H1 (cell line): ENCODE measurements at regions of chr2 and their contacts with region 1.

Region 1: GRCh38 chr2:100381240-100381639 is 36.2 kb downstream of the CHST10 start:
- DNase-seq: peak; percentile 67 to 97
- H3K4me3 ChIP-seq: no peak overlapping the region
- H3K27ac ChIP-seq: no peak overlapping the region
- H3K4me1 ChIP-seq: no peaks in the 10 kb centered on the region
- H3K27me3 ChIP-seq: no peaks in the 10 kb centered on the region
- CTCF ChIP-seq: peak; percentile 28 to 90 (median 87)
- EP300 ChIP-seq: no peak
- POLR2A ChIP-seq: no peak
- RAD21 ChIP-seq: peak; percentile 81 to 87

Region 2: DNA sequence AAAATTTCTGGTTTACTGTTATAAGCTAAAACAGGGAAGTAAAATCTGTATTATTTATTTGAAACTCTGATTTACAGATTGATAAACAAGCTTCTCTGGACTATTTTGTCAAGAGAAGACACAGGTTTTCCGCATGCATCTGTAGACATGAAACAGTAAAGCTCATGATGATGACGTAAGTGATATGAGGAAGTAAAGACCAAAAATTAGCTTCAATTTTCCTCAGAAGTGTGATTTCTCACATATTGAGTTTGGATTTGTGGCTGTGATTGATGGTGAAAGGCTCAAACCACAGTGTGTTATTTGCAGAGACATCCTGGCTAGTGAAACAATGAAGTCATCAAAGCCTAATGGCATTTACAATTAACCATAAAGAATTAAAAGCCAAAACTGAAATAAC is 46.3 kb before region 1 on chr2:
- CTCF ChIA-PET with region 1: interaction called, 11 read pairs
- POLR2A ChIA-PET with region 1: no interaction called
- DNase-seq: no peak
- H3K4me3 ChIP-seq: no peak overlapping the region
- H3K27ac ChIP-seq: no peak overlapping the region
- H3K4me1 ChIP-seq: no peaks in the 10 kb centered on the region; a peak in 1 of 7 replicates
- H3K27me3 ChIP-seq: no peaks in the 10 kb centered on the region
- CTCF ChIP-seq: no peak
- EP300 ChIP-seq: no peak
- POLR2A ChIP-seq: no peak
- RAD21 ChIP-seq: no peak

Region 3: DNA sequence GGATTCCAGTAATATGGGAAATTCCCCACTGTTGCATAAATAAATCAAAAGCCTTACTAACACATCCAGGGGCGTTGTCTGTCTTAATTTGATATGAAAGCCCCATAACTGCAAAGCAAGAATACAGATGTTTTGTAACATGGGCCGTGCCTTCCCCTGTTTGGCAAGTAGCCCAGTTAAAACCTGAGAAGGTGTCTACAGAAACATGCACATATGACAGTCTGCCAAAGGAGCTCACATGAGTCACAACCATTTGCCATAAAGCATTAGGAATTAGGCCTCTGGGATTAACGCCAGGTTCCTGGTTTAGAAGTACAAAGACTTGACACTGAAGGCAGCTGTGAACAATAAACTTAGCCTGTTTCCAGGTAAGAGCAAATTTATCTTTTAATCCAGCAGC is 15.8 kb before region 1 on chr2:
- CTCF ChIA-PET with region 1: interaction called, 18 read pairs
- POLR2A ChIA-PET with region 1: no interaction called
- DNase-seq: no peak
- H3K4me3 ChIP-seq: no peak overlapping the region
- H3K27ac ChIP-seq: no peak overlapping the region
- H3K4me1 ChIP-seq: peaks cover 0 to 8% (median 4%) of the 10 kb centered on the region in 4 experiments; a peak in 3 of 7 replicates
- H3K27me3 ChIP-seq: no peaks in the 10 kb centered on the region
- CTCF ChIP-seq: no peak
- EP300 ChIP-seq: no peak
- POLR2A ChIP-seq: no peak
- RAD21 ChIP-seq: no peak

Region 4: DNA sequence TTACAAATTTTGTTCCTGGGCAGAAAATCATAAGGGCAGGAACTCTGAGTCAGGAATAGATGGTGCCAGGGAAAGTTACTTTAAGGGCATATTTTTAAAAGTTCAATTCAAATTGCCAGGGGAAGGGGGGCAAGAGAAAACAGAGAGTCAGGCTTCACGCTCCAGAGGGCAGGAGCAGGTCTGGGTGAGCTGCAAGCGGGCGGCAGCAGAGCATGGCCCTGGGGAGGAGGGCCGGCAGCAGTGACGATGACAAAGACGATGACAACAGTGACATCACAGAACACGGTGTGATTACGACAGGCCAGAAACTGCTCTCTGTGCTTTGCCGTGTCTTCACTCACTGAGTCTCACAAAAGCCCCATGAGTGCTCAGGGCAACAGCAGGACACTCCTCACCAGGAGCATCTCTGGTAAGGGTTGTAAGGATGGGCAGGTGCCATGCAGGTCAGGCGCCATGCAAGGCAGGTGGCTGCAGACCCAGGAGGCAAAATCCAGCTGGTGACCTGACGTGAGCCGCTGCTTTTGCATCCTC is 12.9 kb after region 1 on chr2:
- CTCF ChIA-PET with region 1: interaction called, 30 read pairs
- POLR2A ChIA-PET with region 1: no interaction called
- DNase-seq: no peak
- H3K4me3 ChIP-seq: no peak overlapping the region
- H3K27ac ChIP-seq: no peak overlapping the region
- H3K4me1 ChIP-seq: no peaks in the 10 kb centered on the region
- H3K27me3 ChIP-seq: no peaks in the 10 kb centered on the region
- CTCF ChIP-seq: no peak
- EP300 ChIP-seq: no peak
- POLR2A ChIP-seq: no peak
- RAD21 ChIP-seq: no peak